Esophagus muscularis mucosa (tissue), 4 donors: ENCODE measurements at regions of chr11 and their contacts with region 1.

Region 1: GRCh38 chr11:34926101-34926830 is 9.8 kb downstream of the PDHX start:
- DNase-seq: no peak
- H3K4me3 ChIP-seq: no peak overlapping the region
- H3K27ac ChIP-seq: no peak overlapping the region
- H3K4me1 ChIP-seq: peaks cover 20 to 87% (median 67%) of the 10 kb centered on the region in 4 donors
- H3K27me3 ChIP-seq: no peaks in the 10 kb centered on the region
- CTCF ChIP-seq: peak; percentile 78 to 83 (median 82)
- EP300 ChIP-seq: no peak
- POLR2A ChIP-seq: no peak

Region 2: DNA sequence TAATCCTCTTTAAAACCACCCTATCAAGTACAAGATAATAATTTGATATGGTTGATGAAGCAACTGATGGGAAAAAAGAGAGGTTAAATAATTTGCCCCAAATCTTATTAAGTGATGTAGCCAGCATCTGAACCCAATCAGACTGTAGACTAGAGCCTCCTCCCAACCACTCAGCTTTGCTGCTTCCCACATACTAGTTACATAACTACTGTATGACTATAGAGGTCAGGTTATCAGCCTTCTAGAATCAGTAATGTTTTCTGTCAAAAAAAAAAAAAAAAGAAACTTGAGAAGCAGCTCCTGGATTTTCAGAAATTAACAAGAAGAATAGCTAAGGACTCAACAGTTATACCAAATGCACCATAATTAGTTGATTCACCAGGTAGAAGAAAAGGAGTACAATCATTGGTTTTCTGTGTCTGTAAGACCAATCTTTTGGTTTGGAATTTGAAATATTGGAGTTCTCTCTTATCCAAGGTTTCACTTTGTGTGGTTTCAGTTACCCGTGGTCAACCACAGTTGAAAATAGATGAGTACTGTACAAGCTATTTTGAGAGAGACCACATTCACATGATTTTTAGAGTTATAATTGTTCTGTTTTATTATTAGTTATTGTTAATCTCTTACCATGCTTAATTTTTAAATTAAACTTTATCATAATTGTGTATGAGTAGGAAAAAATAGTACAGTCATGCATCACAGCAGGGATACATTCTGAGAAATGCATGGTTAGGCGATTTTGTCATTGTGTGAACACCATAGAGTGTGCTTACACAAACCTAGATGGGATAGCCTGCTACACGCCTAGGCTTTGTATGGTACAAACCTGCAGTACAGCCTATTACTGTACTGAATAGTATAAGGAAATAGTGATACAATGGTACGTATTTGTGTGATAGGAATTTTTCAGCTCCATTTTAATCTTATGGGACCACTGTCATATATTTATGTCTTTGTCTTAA is 62.3 kb after region 1 on chr11:
- intact Hi-C with region 1: loop called (anchors 5 kb)
- DNase-seq: no peak
- H3K4me3 ChIP-seq: no peak overlapping the region
- H3K27ac ChIP-seq: no peak overlapping the region
- H3K4me1 ChIP-seq: no peaks in the 10 kb centered on the region
- H3K27me3 ChIP-seq: no peaks in the 10 kb centered on the region
- CTCF ChIP-seq: no peak
- EP300 ChIP-seq: no peak
- POLR2A ChIP-seq: no peak

Region 3: GRCh38 chr11:35237860-35238715 is 311.8 kb after region 1 on chr11:
- intact Hi-C with region 1: loop called (anchors 10 kb)
- DNase-seq: no peak
- H3K4me3 ChIP-seq: no peak overlapping the region
- H3K27ac ChIP-seq: peak overlapping the region in 2 of 4 donors; percentile 15 to 48
- H3K4me1 ChIP-seq: peaks cover 0 to 43% (median 40%) of the 10 kb centered on the region in 4 donors
- H3K27me3 ChIP-seq: no peaks in the 10 kb centered on the region
- CTCF ChIP-seq: peak; percentile 44 to 59 (median 51)
- EP300 ChIP-seq: no peak
- POLR2A ChIP-seq: no peak

Region 4: DNA sequence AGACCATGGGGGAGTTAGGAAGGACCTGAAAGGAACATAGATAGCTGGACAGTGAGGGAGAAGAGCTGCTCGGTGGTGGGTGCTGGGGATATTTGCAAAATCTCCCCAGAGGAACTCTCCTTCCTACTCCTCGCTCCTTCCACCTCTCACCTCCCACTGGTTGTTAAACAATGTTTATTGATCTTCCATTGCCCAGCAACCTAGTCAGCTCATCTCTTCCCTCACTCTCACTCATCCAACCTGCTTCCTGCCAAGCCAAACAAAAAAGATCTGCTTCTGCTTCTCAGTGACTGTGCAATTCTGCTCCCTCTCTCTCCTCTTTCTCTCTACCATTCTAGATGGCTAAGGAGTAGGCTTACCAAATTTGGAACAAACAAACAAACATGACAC is 378.1 kb after region 1 on chr11:
- intact Hi-C with region 1: loop called (anchors 5 kb)
- DNase-seq: no peak
- H3K4me3 ChIP-seq: no peak overlapping the region
- H3K27ac ChIP-seq: peak overlapping the region; percentile 65 to 78 (median 70)
- H3K4me1 ChIP-seq: peaks cover 8 to 42% (median 32%) of the 10 kb centered on the region in 4 donors
- H3K27me3 ChIP-seq: no peaks in the 10 kb centered on the region
- CTCF ChIP-seq: no peak
- EP300 ChIP-seq: no peak
- POLR2A ChIP-seq: no peak

Region 5: DNA sequence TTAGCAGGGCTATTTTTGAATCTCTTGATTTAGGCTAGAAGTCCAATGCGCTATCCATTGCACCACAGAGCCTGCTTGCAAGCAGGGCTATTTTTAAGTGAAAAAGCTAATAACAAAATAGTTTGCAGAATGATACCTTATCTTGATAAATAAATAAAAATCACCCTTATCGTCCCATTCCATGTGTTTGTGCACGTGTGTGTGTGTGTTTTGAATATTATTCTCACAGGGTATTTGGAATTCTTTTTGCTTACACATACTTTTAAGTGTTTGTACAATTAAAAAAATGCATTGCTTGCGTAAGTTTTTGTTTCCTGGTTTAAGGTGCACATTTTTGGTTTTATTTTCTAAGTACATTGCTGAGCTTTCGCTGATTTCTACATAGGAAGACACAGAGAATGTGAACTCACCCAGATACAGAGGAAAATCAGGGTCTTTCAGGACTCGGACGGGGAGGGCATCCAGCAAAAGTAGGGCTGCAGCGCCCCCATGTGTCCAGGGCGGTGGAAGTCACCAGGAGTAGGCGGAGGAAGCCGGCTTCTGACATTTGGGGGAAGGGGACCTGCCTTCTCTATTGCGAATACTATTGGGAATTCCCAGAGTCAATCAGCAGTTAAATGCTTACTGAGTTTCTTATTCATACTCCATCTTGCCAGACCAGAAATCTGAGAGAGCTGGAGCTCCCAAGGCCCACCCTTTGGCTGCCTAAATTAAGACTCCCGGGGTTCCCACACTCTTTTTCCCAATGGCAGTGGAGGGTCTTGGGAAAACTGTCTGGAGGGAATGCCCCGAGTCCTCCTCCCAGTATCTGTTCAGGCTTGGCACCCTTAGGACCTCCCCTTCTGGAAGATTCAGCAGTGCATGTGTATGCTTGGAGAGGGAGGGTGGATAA is 465.9 kb after region 1 on chr11:
- intact Hi-C with region 1: loop called (anchors 2 kb)
- DNase-seq: peak; percentile 94
- H3K4me3 ChIP-seq: peak overlapping the region in 3 of 4 donors; percentile 17 to 36 (median 18)
- H3K27ac ChIP-seq: no peak overlapping the region
- H3K4me1 ChIP-seq: peaks cover 8 to 21% (median 17%) of the 10 kb centered on the region in 4 donors
- H3K27me3 ChIP-seq: no peaks in the 10 kb centered on the region
- CTCF ChIP-seq: peak; percentile 83 to 87 (median 85)
- EP300 ChIP-seq: no peak
- POLR2A ChIP-seq: no peak